Aorta (tissue), 5 donors: ENCODE measurements at regions of chr1 and their contacts with region 1.

Region 1: GRCh38 chr1:88683541-88684481 is at the start of gene PKN2:
- DNase-seq: peak; percentile 99
- ATAC-seq: peak; percentile 100
- H3K4me3 ChIP-seq: peak within 1 kb of the TSS; percentile 77 to 79
- H3K27ac ChIP-seq: peak within 1 kb of the TSS; percentile 49 to 85
- H3K4me1 ChIP-seq: no peaks in the 10 kb centered on the region
- H3K27me3 ChIP-seq: no peaks in the 10 kb centered on the region
- total RNA-seq, gene PKN2: 37.4 to 38.1 TPM

Region 2: GRCh38 chr1:88455621-88456256 is 228.1 kb before region 1 on chr1:
- intact Hi-C with region 1: no loop called
- DNase-seq: no peak
- ATAC-seq: no peak
- H3K4me3 ChIP-seq: no peak overlapping the region
- H3K27ac ChIP-seq: no peak overlapping the region
- H3K4me1 ChIP-seq: no peaks in the 10 kb centered on the region
- H3K27me3 ChIP-seq: no peaks in the 10 kb centered on the region

Region 3: DNA sequence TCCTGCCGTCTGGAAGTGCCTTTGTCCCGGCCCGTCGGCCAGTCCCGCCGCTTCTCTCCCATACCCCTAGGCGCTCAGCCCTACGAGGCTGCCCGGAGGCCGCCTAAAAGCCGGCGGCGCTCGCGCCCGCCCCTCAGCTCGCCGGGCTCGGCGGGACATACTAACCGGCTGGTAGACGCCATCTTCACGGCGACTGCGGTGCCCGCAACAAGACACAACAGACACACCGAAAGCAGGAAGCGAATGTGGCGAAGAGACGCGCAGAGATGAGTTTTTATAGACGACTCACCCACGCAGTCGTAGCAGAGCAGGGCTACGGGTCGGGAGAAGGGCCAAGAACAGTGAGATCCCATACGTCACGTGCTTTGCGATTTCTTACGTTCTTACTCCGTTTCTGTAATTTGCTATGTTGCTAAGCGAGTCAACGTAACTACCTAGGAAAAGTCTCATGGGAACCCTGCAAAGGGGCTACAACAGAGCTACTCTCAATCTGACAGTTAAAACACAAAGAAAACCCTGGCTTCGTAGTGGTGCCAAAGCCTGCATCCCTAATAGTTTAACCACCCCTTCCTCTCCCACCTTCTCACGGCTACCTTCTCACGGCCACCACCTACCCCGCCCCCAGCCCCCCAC is 207.6 kb after region 1 on chr1 and contains the start of gene GTF2B:
- intact Hi-C with region 1: loop called in 1 of 2 experiments (anchors 5 kb)
- DNase-seq: peak; percentile 95 to 96
- ATAC-seq: peak; percentile 96
- H3K4me3 ChIP-seq: peak within 1 kb of the TSS; percentile 77 to 99
- H3K27ac ChIP-seq: peak within 1 kb of the TSS; percentile 20 to 81
- H3K4me1 ChIP-seq: peaks cover 0 to 7% of the 10 kb centered on the region in 2 donors
- H3K27me3 ChIP-seq: no peaks in the 10 kb centered on the region
- total RNA-seq, gene GTF2B: 20.9 to 24.7 TPM